Caco-2 (cell line): ENCODE measurements at regions of chr5 and their contacts with region 1.

Region 1: DNA sequence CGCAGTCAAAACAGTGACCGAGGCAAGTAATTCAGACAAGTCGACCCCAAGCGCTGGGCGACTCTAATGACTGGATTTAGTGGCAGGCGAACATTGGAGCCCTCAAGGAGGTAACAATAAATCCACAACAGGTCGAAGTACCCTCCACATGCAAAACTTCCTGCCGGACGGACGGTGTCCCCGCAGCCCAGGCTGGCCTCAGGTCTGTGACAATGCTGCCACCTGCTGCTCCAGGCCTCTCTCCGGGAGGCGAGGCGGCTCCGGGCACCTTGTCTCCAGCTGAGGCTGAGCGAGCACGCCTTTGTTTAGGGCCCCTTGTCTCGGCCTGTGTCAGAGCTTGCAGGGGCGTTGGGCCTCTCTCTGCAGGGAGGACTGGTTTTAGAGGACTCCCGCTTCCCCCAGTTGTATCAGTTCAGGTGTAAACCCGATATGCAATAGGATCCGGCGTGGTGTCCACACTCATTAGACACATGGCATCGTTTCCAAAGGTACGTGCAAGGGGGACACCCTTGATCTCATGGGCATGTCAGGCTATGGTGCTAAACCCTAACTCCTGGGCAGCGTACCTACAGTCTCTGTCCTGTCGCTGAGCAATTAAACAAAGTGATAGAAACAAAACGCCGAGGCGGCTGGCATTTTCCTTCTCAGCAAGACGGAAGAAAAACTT is 628.0 kb upstream of the ADAMTS16 start:
- DNase-seq: peak; percentile 66 to 68
- H3K4me3 ChIP-seq: no peak overlapping the region
- H3K4me3 Mint-ChIP-seq: peak overlapping the region; percentile 10
- H3K27ac Mint-ChIP-seq: no peak overlapping the region
- H3K4me1 ChIP-seq: no peaks in the 10 kb centered on the region
- H3K4me1 Mint-ChIP-seq: no peaks in the 10 kb centered on the region
- H3K27me3 ChIP-seq: no peaks in the 10 kb centered on the region
- H3K27me3 Mint-ChIP-seq: peaks cover 3% of the 10 kb centered on the region
- CTCF ChIP-seq: peak in 1 of 2 experiments; percentile 67

Region 2: DNA sequence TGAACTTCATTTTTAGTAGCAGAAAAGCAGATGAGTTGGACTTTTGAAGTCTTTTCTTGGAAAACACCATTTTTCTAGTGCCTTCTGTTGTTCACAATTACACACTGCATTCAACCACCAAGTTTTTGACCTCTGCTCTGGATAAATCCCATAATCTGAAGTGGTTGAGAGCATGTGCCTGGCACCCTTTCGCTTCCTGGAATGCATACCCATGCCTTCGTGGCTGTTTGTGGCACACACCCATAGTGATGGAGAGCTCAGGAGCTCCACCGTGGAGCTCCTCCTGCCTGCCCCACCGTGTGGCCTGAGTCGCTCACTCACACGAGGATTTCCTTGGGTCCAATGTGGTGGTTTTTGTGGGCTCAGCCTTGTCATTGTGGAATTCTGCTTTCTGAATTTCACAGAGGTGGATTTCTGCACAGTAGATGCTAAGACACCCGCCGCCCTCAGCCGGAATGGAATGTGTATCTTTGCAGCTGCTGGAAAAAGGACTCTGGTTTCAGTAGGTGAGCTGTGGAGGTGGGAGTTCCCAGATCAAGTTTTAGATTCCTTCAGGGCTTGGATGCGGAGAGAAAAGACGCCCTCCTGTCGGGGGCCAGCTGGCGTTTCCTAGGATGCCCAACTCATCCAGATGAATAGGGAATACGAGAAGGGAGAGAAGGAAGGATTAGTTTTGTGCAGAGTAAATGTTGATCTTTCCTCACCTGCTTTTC is 416.1 kb before region 1 on chr5:
- CTCF ChIA-PET with region 1: no interaction called
- POLR2A ChIA-PET with region 1: no interaction called
- intact Hi-C with region 1: loop called (anchors 10 kb)
- DNase-seq: no peak
- H3K4me3 ChIP-seq: no peak overlapping the region
- H3K4me3 Mint-ChIP-seq: no peak overlapping the region
- H3K27ac Mint-ChIP-seq: no peak overlapping the region
- H3K4me1 ChIP-seq: no peaks in the 10 kb centered on the region
- H3K4me1 Mint-ChIP-seq: no peaks in the 10 kb centered on the region
- H3K27me3 ChIP-seq: no peaks in the 10 kb centered on the region
- H3K27me3 Mint-ChIP-seq: no peaks in the 10 kb centered on the region
- CTCF ChIP-seq: no peak

Region 3: GRCh38 chr5:4640795-4641194 is 128.7 kb after region 1 on chr5:
- CTCF ChIA-PET with region 1: no interaction called
- POLR2A ChIA-PET with region 1: no interaction called
- intact Hi-C with region 1: loop called (anchors 5 kb)
- DNase-seq: peak in 1 of 2 experiments; percentile 16
- H3K4me3 ChIP-seq: no peak overlapping the region
- H3K4me3 Mint-ChIP-seq: no peak overlapping the region
- H3K27ac Mint-ChIP-seq: no peak overlapping the region
- H3K4me1 ChIP-seq: no peaks in the 10 kb centered on the region
- H3K4me1 Mint-ChIP-seq: no peaks in the 10 kb centered on the region
- H3K27me3 ChIP-seq: no peaks in the 10 kb centered on the region
- H3K27me3 Mint-ChIP-seq: peaks cover 5% of the 10 kb centered on the region
- CTCF ChIP-seq: peak in 1 of 2 experiments; percentile 24

Region 4: GRCh38 chr5:4862500-4862899 is 350.4 kb after region 1 on chr5:
- CTCF ChIA-PET with region 1: no interaction called
- POLR2A ChIA-PET with region 1: no interaction called
- intact Hi-C with region 1: loop called (anchors 2 kb)
- DNase-seq: peak in 1 of 2 experiments; percentile 13
- H3K4me3 ChIP-seq: no peak overlapping the region
- H3K4me3 Mint-ChIP-seq: no peak overlapping the region
- H3K27ac Mint-ChIP-seq: no peak overlapping the region
- H3K4me1 ChIP-seq: no peaks in the 10 kb centered on the region
- H3K4me1 Mint-ChIP-seq: no peaks in the 10 kb centered on the region
- H3K27me3 ChIP-seq: no peaks in the 10 kb centered on the region
- H3K27me3 Mint-ChIP-seq: peaks cover 14% of the 10 kb centered on the region
- CTCF ChIP-seq: peak; percentile 66 to 72